Mammary epithelial cell (primary cell): ENCODE measurements at regions of chr21 and their contacts with region 1.

Region 1: GRCh38 chr21:45129189-45129923 is 55.0 kb downstream of the ADARB1 start:
- DNase-seq: peak; percentile 46
- H3K4me3 ChIP-seq: no peak overlapping the region
- H3K27ac ChIP-seq: no peak overlapping the region
- H3K4me1 ChIP-seq: peaks cover 19% of the 10 kb centered on the region
- H3K27me3 ChIP-seq: no peaks in the 10 kb centered on the region
- CTCF ChIP-seq: no peak

Region 2: GRCh38 chr21:44765231-44766013 is 363.9 kb before region 1 on chr21:
- CTCF ChIA-PET with region 1: no interaction called
- dilution Hi-C with region 1: no loop called
- in situ Hi-C with region 1: no loop called
- intact Hi-C with region 1: no loop called
- DNase-seq: peak; percentile 60
- H3K4me3 ChIP-seq: peak overlapping the region in 1 of 3 experiments; percentile 1
- H3K27ac ChIP-seq: no peak overlapping the region
- H3K4me1 ChIP-seq: peaks cover 33% of the 10 kb centered on the region
- H3K27me3 ChIP-seq: no peaks in the 10 kb centered on the region
- CTCF ChIP-seq: no peak

Region 3: GRCh38 chr21:44873356-44874239 is 255.8 kb before region 1 on chr21 and contains the start of gene PTTG1IP:
- CTCF ChIA-PET with region 1: no interaction called
- dilution Hi-C with region 1: no loop called
- in situ Hi-C with region 1: no loop called
- intact Hi-C with region 1: loop called (anchors 1 kb)
- DNase-seq: peak; percentile 97
- H3K4me3 ChIP-seq: peak within 1 kb of the TSS; percentile 71 to 86 (median 75)
- H3K27ac ChIP-seq: peak within 1 kb of the TSS; percentile 72
- H3K4me1 ChIP-seq: peaks cover 54% of the 10 kb centered on the region
- H3K27me3 ChIP-seq: no peaks in the 10 kb centered on the region
- CTCF ChIP-seq: no peak
- total RNA-seq, gene PTTG1IP: 131 to 269 TPM

Region 4: GRCh38 chr21:44939532-44940115 is 189.7 kb before region 1 on chr21 and contains the start of gene SLX9:
- CTCF ChIA-PET with region 1: no interaction called
- dilution Hi-C with region 1: loop called (anchors 5 kb)
- in situ Hi-C with region 1: no loop called
- intact Hi-C with region 1: no loop called
- DNase-seq: peak; percentile 81
- H3K4me3 ChIP-seq: peak within 1 kb of the TSS; percentile 80 to 95 (median 87)
- H3K27ac ChIP-seq: peak within 1 kb of the TSS; percentile 59
- H3K4me1 ChIP-seq: peaks cover 25% of the 10 kb centered on the region
- H3K27me3 ChIP-seq: no peaks in the 10 kb centered on the region
- CTCF ChIP-seq: no peak
- total RNA-seq, gene SLX9: 17.3 to 53.2 TPM

Region 5: GRCh38 chr21:44994695-44995342 is 134.5 kb before region 1 on chr21:
- CTCF ChIA-PET with region 1: interaction called, 3 read pairs
- dilution Hi-C with region 1: no loop called
- in situ Hi-C with region 1: no loop called
- intact Hi-C with region 1: loop called (anchors 5 kb)
- DNase-seq: peak; percentile 53
- H3K4me3 ChIP-seq: no peak overlapping the region
- H3K27ac ChIP-seq: no peak overlapping the region
- H3K4me1 ChIP-seq: peaks cover 8% of the 10 kb centered on the region
- H3K27me3 ChIP-seq: no peaks in the 10 kb centered on the region
- CTCF ChIP-seq: no peak

Region 6: DNA sequence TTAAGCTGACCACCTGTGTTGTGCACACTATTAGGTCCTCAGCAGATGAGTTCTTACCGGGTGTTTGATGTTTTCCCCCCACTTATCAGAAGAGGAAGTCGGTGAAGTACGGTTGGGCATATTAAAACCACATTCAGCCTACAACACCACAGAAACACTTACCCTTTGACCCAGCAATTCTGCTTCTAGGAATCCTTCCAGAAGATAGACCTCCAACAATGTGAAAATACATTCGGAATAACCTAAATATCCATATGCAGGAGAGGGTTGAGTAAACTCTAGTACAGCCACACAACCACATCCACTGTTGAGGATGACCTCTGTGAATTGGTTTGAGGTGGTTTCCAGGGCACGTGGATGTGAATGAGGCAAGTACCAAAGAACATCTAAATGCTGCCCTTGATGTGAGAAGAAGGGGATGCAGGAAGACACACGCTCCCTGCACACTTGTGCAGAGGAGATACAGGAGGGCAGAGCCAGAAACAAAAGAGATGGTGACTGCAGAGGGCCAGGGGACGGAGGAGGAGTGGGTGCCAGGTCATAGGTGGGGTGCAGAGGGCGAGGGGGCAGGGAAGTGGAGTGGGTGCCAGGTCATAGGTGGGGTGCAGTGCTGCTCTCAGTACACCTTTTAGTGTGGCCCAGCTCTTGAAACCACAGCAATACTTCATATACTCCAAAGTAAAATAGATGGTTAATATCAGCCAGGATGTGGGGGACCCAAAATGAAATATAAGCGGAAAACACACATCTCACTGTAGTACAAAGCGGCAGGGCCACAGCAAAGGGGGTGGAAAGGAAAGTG is 42.1 kb before region 1 on chr21:
- CTCF ChIA-PET with region 1: no interaction called
- dilution Hi-C with region 1: loop called (anchors 5 kb)
- in situ Hi-C with region 1: no loop called
- intact Hi-C with region 1: no loop called
- DNase-seq: no peak
- H3K4me3 ChIP-seq: no peak overlapping the region
- H3K27ac ChIP-seq: no peak overlapping the region
- H3K4me1 ChIP-seq: peaks cover 7% of the 10 kb centered on the region
- H3K27me3 ChIP-seq: no peaks in the 10 kb centered on the region
- CTCF ChIP-seq: no peak